Activated naive CD4-positive, alpha-beta T cell treated with anti-CD3 and anti-CD28 coated beads, Interleukin-2, amount 10 ng/mL, durations not matched to agents 7 days and 5 days (primary cell): ENCODE measurements at regions of chr17 and their contacts with region 1.

Region 1: GRCh38 chr17:7931709-7932482 is at the starts of genes CNTROB and TRAPPC1:
- DNase-seq: peak; percentile 100
- H3K4me3 Mint-ChIP-seq: peak within 1 kb of the TSS; percentile 91
- H3K27ac Mint-ChIP-seq: peak within 1 kb of the TSS; percentile 95
- H3K4me1 Mint-ChIP-seq: peaks cover 52% of the 10 kb centered on the region
- H3K27me3 Mint-ChIP-seq: no peaks in the 10 kb centered on the region

Region 2: DNA sequence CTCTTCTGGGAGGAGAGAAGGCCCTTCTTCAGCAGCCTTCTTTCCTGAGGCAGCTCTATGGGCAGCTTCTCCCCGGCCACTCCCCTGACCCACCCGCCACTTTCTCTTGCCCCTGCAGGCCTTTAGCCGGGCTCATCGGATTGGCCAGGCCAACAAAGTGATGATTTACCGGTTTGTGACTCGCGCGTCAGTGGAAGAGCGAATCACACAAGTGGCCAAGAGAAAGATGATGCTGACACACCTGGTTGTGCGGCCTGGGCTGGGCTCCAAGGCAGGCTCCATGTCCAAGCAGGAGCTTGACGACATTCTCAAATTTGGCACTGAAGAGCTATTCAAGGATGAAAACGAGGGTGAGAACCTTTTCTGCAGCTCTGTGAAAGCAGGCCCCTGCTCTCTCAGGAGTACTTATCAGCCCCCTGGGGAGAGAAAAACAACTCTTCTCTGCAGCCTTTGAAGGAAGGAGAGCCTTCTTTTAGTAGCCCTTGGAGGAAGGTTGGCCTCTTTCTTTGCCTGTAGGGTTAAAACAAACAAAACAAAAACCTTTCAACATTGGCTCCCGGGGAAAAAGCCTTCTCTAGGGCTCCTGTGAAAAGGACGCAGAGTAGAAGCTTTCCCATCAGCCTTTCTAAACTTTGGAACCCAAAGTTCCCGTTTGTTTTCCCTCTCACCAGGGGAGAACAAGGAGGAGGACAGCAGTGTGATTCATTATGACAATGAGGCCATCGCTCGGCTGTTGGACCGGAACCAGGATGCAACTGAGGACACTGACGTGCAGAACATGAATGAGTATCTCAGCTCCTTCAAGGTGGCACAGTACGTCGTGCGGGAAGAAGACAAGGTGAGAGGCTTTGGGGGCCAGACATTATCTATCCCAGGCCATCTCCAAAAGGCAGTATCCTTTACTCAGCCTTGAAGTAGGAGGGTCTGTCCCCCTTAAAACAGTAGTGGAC is 28.5 kb before region 1 on chr17:
- CTCF ChIA-PET with region 1: no interaction called
- DNase-seq: no peak
- H3K4me3 Mint-ChIP-seq: no peak overlapping the region
- H3K27ac Mint-ChIP-seq: no peak overlapping the region
- H3K4me1 Mint-ChIP-seq: no peaks in the 10 kb centered on the region
- H3K27me3 Mint-ChIP-seq: no peaks in the 10 kb centered on the region

Region 3: GRCh38 chr17:7915611-7916382 is 16.1 kb before region 1 on chr17 and contains the start of gene RNF227:
- CTCF ChIA-PET with region 1: interaction called, 22 read pairs
- DNase-seq: peak; percentile 89
- H3K4me3 Mint-ChIP-seq: peak within 1 kb of the TSS; percentile 87
- H3K27ac Mint-ChIP-seq: peak within 1 kb of the TSS; percentile 94
- H3K4me1 Mint-ChIP-seq: peaks cover 43% of the 10 kb centered on the region
- H3K27me3 Mint-ChIP-seq: peaks cover 4% of the 10 kb centered on the region

Region 4: GRCh38 chr17:7947651-7948050 is 15.8 kb after region 1 on chr17:
- CTCF ChIA-PET with region 1: interaction called, 21 read pairs
- DNase-seq: no peak
- H3K4me3 Mint-ChIP-seq: no peak overlapping the region
- H3K27ac Mint-ChIP-seq: no peak overlapping the region
- H3K4me1 Mint-ChIP-seq: peaks cover 34% of the 10 kb centered on the region
- H3K27me3 Mint-ChIP-seq: no peaks in the 10 kb centered on the region